PC-9 (cell line): ENCODE measurements at regions of chr21 and their contacts with region 1.

Region 1: GRCh38 chr21:36917471-36918158 is 48.9 kb downstream of the HLCS start:
- DNase-seq: peak in 1 of 2 experiments; percentile 16
- H3K4me3 ChIP-seq: no peak overlapping the region
- H3K27ac ChIP-seq: no peak overlapping the region
- H3K4me1 ChIP-seq: no peaks in the 10 kb centered on the region
- H3K27me3 ChIP-seq: no peaks in the 10 kb centered on the region
- CTCF ChIP-seq: no peak; the same call in none of the 2 replicates

Region 2: DNA sequence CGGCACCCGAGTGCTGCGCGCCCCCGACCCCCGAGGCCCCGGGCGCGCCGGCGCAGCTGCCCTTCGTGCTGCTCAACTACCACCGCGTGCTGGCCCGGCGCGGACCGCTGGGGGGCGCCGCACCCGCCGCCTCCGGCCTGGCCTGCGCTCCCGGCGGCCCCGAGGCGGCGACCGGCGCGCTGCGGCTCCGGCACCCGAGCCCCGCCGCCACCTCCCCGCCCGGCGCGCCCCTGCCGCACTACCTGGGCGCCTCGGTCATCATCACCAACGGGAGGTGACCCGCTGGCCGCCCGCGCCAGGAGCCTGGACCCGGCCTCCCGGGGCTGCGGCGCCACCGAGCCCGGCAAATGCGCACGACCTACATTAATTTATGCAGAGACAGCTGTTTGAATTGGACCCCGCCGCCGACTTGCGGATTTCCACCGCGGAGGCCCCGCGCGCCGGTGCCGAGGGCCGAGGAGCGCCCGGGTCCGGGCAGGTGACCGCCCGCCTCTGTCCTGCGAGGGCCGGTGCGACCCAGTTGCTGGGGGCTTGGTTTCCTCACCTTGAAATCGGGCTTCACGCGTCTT is 169.7 kb before region 1 on chr21:
- CTCF ChIA-PET with region 1: no interaction called
- POLR2A ChIA-PET with region 1: no interaction called
- intact Hi-C with region 1: loop called (anchors 5 kb)
- DNase-seq: peak in 1 of 2 experiments; percentile 41
- H3K4me3 ChIP-seq: no peak overlapping the region
- H3K27ac ChIP-seq: no peak overlapping the region
- H3K4me1 ChIP-seq: no peaks in the 10 kb centered on the region
- H3K27me3 ChIP-seq: no peaks in the 10 kb centered on the region
- CTCF ChIP-seq: no peak

Region 3: GRCh38 chr21:36783612-36784383 is 133.8 kb before region 1 on chr21:
- CTCF ChIA-PET with region 1: no interaction called
- POLR2A ChIA-PET with region 1: no interaction called
- intact Hi-C with region 1: loop called (anchors 10 kb)
- DNase-seq: peak; percentile 67 to 92
- H3K4me3 ChIP-seq: 0 out of 2 replicates have a peak overlapping the region, but pooled peaks have one; percentile 24
- H3K27ac ChIP-seq: peak overlapping the region; percentile 62
- H3K4me1 ChIP-seq: peaks cover 31% of the 10 kb centered on the region
- H3K27me3 ChIP-seq: no peaks in the 10 kb centered on the region
- CTCF ChIP-seq: no peak